Vagina (tissue), 2 donors: ENCODE measurements at regions of chr21 and their contacts with region 1.

Region 1: DNA sequence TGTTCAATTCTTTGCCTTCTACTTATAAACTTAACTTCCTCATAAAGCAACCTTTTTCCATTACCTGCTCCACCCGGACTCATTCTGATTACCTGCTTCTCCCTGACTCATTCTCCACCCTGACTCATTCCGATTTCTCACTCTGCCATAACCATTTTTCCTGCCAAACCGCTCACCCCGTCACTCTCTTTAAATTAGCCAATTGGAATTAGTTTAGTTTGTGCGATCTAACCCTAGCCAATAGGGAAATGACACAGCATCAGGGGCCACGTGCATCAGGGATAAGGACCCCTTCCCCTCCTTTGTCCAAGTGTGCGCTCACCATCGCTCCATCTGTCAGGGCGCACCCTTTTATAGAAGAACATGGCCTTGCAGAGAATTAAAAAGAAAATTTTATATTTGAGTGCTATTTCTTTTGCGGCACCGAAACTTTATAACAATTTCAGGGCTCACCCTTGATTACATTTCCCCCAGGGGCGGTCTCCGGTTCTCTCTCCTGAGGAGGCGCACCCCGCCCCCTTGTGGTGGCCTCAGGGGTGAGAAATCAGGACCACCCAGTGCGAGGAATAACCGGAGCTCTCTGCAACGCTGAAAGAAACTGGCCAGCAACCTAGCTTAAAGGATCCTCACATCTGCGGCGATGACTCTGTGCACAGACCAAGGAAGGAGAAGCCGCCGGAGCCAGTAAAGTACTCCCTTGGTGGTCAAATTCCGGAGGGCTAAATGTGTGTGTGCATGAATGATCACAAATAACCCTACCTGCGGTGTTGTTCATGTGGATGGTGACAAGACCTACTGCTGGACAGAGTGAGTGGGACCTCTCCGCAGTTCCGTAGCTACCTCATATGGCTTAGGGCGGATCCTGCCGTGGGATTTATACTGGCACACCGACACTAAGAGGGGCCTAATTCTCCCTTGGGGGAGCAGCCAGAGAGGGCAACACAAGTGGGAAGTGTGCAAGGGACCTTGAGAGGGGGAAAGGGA is 30.3 kb upstream of the CBR3 start:
- DNase-seq: no peak
- H3K4me3 ChIP-seq: peak overlapping the region in 1 of 2 donors; percentile 4
- H3K27ac ChIP-seq: no peak overlapping the region
- H3K4me1 ChIP-seq: peaks cover 8% of the 10 kb centered on the region
- H3K27me3 ChIP-seq: no peaks in the 10 kb centered on the region
- CTCF ChIP-seq: peak in 2 of 3 experiments; percentile 24 to 41
- POLR2A ChIP-seq: no peak

Region 2: DNA sequence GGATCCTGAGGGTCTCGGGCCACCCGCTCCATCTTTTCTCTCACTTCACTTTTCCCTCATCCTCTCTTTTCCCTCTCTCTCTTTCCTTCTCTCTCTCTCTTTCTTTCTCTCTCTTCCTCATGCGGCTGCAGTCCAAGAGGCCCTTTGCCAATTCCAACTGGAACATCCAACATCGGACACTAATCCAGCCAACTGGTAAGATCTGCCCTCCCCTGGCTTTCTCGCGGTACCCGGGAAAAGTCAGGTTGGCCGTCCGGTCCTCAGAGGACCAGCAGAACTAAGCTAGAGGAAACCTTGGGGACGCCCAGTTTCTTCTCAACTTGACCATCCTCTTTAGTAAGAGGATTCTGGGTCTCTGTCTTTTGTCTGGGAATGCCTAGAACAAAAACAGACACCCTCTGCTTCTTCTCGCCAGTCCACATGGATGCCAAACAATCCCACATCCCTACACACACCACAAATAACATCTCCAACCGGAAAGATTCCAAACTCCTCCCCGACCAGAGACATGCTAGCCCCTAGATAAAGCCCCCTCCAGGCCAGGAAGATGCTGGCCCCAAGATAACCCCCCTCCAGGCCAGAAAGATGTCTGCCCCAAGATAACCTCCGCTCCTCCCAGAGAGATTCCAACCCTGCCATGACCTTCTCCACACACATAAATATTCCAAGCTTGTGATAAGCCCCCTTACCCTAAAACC is 41.1 kb before region 1 on chr21:
- intact Hi-C with region 1: loop called (anchors 1 kb)
- DNase-seq: no peak
- H3K4me3 ChIP-seq: no peak overlapping the region
- H3K27ac ChIP-seq: no peak overlapping the region
- H3K4me1 ChIP-seq: peaks cover 20% of the 10 kb centered on the region
- H3K27me3 ChIP-seq: no peaks in the 10 kb centered on the region
- CTCF ChIP-seq: no peak
- POLR2A ChIP-seq: no peak

Region 3: GRCh38 chr21:36163750-36164741 is 59.4 kb after region 1 on chr21:
- intact Hi-C with region 1: no loop called
- DNase-seq: no peak
- H3K4me3 ChIP-seq: no peak overlapping the region
- H3K27ac ChIP-seq: no peak overlapping the region
- H3K4me1 ChIP-seq: peaks cover 7% of the 10 kb centered on the region
- H3K27me3 ChIP-seq: no peaks in the 10 kb centered on the region
- CTCF ChIP-seq: no peak
- POLR2A ChIP-seq: no peak